ENCODE measurements at regions of chr10 and their contacts with region 1.

Region 1: GRCh38 chr10:112446855-112447711 is at the starts of genes VTI1A and ZDHHC6:
- DNase-seq: peak; percentile 93
- ATAC-seq: peak; percentile 90
- H3K4me3 ChIP-seq: peak within 1 kb of the TSS; percentile 79 to 100 (median 99)
- H3K4me3 Mint-ChIP-seq: peak within 1 kb of the TSS; percentile 91
- H3K27ac ChIP-seq: peak within 1 kb of the TSS; percentile 74 to 84
- H3K27ac Mint-ChIP-seq: peak within 1 kb of the TSS; percentile 88
- H3K4me1 ChIP-seq: peaks cover 20 to 23% of the 10 kb centered on the region in 2 donors
- H3K4me1 Mint-ChIP-seq: peaks cover 49% of the 10 kb centered on the region
- H3K27me3 ChIP-seq: no peaks in the 10 kb centered on the region
- H3K27me3 Mint-ChIP-seq: no peaks in the 10 kb centered on the region
- CTCF ChIP-seq: peak; percentile 11
- total RNA-seq, gene VTI1A: 84.1 and 85.8 TPM in 2 replicates
- total RNA-seq, gene ZDHHC6: 53.9 and 61.2 TPM in 2 replicates

Region 2: GRCh38 chr10:112122827-112123226 is 324.3 kb before region 1 on chr10:
- CTCF ChIA-PET with region 1: no interaction called
- POLR2A ChIA-PET with region 1: no interaction called
- intact Hi-C with region 1: no loop called
- DNase-seq: no peak
- ATAC-seq: no peak
- H3K4me3 ChIP-seq: no peak overlapping the region
- H3K4me3 Mint-ChIP-seq: no peak overlapping the region
- H3K27ac ChIP-seq: no peak overlapping the region
- H3K27ac Mint-ChIP-seq: no peak overlapping the region
- H3K4me1 ChIP-seq: no peaks in the 10 kb centered on the region
- H3K4me1 Mint-ChIP-seq: no peaks in the 10 kb centered on the region
- H3K27me3 ChIP-seq: peaks cover 0 to 6% (median 0%) of the 10 kb centered on the region in 4 experiments
- H3K27me3 Mint-ChIP-seq: no peaks in the 10 kb centered on the region
- CTCF ChIP-seq: no peak

Region 3: DNA sequence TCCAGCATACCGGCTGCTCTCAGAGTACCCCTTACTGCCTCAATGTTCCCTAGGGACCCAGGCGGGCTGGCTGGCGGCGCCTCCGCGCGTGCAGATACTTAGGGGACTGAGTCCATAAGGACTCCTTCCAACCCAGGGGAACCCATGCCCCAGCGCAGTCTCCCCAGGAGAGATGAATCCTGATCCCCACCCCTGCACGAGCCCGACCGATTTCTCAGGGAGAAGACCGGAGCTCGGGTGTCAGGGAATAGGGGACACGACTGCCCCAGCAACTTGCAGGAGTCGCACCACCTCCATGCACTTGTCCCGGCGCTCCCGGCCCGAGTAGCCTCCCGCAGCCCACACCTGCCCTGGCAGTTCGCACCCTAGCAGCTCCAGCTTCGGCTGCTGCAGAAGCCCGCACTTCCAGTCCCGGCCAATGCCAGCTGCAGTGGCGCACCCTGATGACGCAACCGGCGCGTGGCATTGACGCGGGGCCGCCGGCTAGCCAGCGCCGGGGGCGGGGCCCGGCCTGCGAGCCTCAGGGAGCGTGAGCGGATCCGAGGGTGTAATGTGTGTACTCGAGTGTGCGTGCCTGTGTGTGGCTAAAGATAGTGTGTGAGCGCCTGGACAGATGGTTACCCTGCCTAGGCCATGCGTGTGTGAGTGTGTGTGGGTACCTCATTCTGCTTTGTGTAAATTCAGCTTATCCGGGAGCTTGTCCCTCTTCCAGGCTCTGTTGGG is 263.6 kb before region 1 on chr10 and contains the start of gene GPAM:
- CTCF ChIA-PET with region 1: no interaction called
- POLR2A ChIA-PET with region 1: interaction called, 7 read pairs
- intact Hi-C with region 1: loop called (anchors 2 kb)
- DNase-seq: peak; percentile 96
- ATAC-seq: peak; percentile 96
- H3K4me3 ChIP-seq: peak within 1 kb of the TSS; percentile 88 to 97 (median 95)
- H3K4me3 Mint-ChIP-seq: peak within 1 kb of the TSS; percentile 97
- H3K27ac ChIP-seq: peak within 1 kb of the TSS; percentile 49 to 81
- H3K27ac Mint-ChIP-seq: peak within 1 kb of the TSS; percentile 95
- H3K4me1 ChIP-seq: peaks cover 12 to 18% of the 10 kb centered on the region in 2 donors
- H3K4me1 Mint-ChIP-seq: peaks cover 23% of the 10 kb centered on the region
- H3K27me3 ChIP-seq: no peaks in the 10 kb centered on the region
- H3K27me3 Mint-ChIP-seq: no peaks in the 10 kb centered on the region
- CTCF ChIP-seq: no peak
- total RNA-seq, gene GPAM: 8.2 and 12.0 TPM in 2 replicates

Region 4: GRCh38 chr10:112490545-112490944 is 43.5 kb after region 1 on chr10:
- CTCF ChIA-PET with region 1: no interaction called
- POLR2A ChIA-PET with region 1: no interaction called
- intact Hi-C with region 1: no loop called
- DNase-seq: no peak
- ATAC-seq: no peak
- H3K4me3 ChIP-seq: no peak overlapping the region
- H3K4me3 Mint-ChIP-seq: no peak overlapping the region
- H3K27ac ChIP-seq: no peak overlapping the region
- H3K27ac Mint-ChIP-seq: no peak overlapping the region
- H3K4me1 ChIP-seq: no peaks in the 10 kb centered on the region
- H3K4me1 Mint-ChIP-seq: no peaks in the 10 kb centered on the region
- H3K27me3 ChIP-seq: no peaks in the 10 kb centered on the region
- H3K27me3 Mint-ChIP-seq: no peaks in the 10 kb centered on the region
- CTCF ChIP-seq: no peak